Left colon (tissue), 2 donors: ENCODE measurements at regions of chr11 and their contacts with region 1.

Region 1: DNA sequence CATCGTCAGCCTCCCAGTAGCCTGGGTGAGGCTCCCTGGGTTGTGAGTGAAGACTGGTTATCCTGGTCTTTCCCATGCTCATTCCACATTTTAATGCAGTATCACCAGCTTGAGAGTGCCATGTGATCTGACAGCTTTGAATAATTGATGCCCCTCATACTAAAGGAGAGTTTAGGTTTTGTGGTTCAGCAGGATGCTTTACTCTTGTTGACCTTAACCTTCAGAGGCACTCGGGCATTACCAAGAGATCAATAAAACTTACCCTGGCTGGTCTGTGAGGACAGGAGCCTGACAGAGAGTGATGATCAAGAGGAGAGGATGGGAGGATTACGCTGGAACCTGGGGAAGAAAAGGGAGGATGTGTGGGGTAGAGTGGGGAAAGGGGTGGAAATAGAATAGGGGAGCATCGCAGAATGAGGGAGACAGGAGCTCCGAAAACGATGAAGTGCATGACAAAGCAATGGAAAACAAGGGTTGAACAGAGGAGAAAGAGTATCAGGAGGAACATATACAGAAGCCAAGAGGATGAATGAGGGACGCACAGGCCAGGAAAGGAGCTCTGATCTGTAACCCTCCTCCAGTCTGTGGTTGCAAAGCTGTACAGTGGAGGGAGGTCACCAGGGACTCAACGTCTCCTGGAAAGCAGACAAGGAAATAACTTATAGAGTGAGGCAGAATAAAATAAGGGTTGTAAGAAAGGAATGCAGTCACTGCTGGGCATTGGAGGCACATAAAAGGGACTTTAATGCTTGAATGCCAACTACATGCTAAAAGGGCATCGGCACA is 594.5 kb downstream of the NTM start:
- DNase-seq: no peak
- ATAC-seq: no peak

Region 2: DNA sequence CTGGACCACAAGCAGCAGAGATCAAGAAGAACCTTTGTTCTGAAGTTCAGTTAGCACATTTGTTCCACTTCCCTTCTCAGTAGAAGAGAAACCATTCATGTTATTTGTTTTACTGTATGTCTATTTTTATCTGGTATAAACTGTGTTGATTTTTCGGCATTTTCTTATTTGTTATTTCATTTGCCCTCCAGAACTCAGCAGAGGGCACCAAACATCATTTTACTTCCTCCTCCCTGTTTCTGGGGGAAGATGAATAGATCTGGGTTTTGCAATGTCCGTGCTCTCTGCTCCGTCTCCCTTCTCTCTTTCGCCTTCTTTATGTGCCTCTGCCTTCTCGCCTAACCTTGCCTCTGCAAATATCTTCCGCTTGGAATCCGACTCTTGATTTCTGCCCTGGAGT is 227.5 kb before region 1 on chr11:
- intact Hi-C with region 1: loop called in 1 of 2 experiments (anchors 5 kb)
- DNase-seq: no peak
- ATAC-seq: no peak

Region 3: DNA sequence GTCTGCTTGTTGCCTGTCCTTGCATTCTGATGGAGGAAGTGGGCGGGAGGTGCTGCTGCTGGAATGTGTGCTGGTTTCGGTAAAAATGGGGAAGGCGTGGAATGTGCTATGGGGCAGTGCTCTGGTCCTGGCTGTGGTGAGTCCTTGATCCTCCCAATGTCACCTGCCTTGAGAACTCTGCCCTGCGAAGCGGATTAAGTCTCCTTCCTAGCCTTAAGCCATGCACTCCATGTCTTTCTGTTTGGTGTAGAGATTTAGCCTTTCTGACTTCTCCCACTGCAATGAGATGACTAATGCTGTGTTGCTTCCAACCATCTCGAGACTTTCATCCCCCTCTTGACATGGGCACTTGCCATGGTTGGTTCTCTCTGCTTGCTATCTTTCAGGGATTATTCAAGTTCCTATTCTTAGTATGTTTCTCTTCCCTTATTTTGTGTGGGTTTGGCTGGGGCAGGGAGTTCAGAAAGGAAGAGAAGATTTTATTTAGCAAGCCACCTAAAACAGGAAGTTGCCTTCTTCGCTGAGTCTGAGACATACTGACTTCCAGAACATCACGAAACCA is 93.4 kb after region 1 on chr11:
- intact Hi-C with region 1: no loop called
- DNase-seq: no peak
- ATAC-seq: peak; percentile 13

Region 4: DNA sequence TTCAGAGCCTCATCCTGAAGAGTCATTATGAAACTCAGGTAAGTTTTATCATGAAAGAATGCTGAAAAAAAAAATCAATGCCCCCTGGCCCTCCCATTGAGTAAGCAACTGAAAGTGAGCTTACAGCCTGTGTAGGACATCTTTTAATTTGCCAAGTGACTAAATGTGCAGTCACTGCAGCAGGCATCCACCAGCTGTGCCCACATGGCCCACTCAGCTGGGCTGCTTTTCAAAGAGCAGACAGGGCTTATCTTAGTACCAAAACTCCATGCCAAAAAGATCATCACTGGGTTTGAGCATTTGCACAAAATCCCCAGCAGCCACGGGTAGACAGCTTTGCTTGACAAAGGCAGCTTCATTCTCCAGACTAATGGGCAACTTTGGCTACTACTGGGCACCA is 115.2 kb after region 1 on chr11:
- intact Hi-C with region 1: no loop called
- DNase-seq: no peak
- ATAC-seq: no peak